ENCODE measurements at regions of chr20 and their contacts with region 1.

Region 1: GRCh38 chr20:31849455-31849925 is 4.1 kb upstream of the FOXS1 start:
- DNase-seq: no peak
- ATAC-seq: no peak
- H3K4me3 Mint-ChIP-seq: no peak overlapping the region
- H3K27ac Mint-ChIP-seq: no peak overlapping the region
- H3K4me1 Mint-ChIP-seq: no peaks in the 10 kb centered on the region
- H3K27me3 Mint-ChIP-seq: peaks cover 13% of the 10 kb centered on the region

Region 2: DNA sequence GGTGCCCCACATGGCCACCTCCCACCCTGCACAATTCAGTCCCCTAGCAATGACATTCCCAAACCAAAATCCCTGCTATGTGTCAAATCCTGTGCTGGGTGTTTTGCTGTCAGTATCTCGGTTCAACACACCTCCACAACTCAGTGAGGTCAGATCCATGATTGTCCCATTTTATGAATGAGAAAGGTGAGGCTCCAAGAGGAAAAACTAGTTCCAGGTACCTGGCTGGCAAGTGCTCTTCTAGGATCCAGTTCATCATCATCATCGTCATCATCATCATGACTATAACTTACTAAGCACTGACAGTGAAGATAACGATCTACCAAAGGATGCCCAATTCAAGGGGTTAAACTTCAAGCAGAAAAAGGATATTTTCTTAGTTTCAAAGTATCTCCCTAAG is 229.2 kb before region 1 on chr20:
- CTCF ChIA-PET with region 1: no interaction called
- POLR2A ChIA-PET with region 1: no interaction called
- DNase-seq: no peak
- ATAC-seq: no peak
- H3K4me3 Mint-ChIP-seq: no peak overlapping the region
- H3K27ac Mint-ChIP-seq: no peak overlapping the region
- H3K4me1 Mint-ChIP-seq: peaks cover 7% of the 10 kb centered on the region
- H3K27me3 Mint-ChIP-seq: peaks cover 14% of the 10 kb centered on the region

Region 3: DNA sequence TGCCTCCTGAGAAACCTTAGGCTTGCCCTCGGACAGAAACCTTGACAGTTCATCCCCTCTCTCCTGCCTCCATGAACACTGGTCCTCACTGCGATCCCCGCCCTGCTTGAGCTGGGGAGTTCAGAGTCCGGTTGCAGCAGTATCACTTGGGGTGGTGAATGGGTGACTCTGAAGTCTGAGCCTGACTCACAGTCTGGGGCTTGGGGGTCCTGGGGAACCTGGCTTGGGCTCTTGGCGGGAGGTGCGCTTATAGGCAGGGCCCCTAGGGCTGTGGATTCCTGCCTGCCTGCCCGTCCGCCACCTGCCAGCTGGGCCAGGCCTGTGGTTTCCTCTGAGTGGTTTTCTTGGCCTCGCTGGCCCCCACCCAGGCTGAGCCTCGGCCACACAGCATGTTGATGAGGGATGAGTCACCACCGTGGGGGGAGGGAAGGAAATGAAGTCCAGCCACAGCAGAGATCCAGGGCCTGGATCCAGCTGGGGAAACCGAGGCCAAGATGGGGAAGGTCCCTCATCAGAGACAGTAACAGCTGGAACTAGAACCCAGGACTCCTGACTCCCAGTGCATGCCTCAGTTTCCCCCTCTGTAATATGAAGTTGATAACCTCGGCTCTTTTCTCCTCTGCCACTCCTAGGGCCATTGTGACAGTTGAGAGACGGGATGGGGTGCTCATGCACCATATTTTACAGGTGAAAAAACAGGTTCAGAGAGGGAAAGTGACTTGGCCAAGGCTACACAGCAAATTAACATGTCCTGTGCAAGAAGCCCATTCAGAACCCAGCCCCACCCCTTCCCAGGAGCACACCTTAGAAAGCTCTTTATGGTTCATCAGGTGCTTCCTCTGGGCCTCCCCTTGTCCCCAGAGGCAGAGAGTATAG is 13.3 kb before region 1 on chr20:
- CTCF ChIA-PET with region 1: interaction called, 19 read pairs
- POLR2A ChIA-PET with region 1: no interaction called
- DNase-seq: peak; percentile 65
- ATAC-seq: peak; percentile 54
- H3K4me3 Mint-ChIP-seq: no peak overlapping the region
- H3K27ac Mint-ChIP-seq: no peak overlapping the region
- H3K4me1 Mint-ChIP-seq: peaks cover 23% of the 10 kb centered on the region
- H3K27me3 Mint-ChIP-seq: no peaks in the 10 kb centered on the region

Region 4: GRCh38 chr20:31879143-31879987 is 29.9 kb after region 1 on chr20:
- CTCF ChIA-PET with region 1: interaction called, 11 read pairs
- POLR2A ChIA-PET with region 1: no interaction called
- DNase-seq: peak; percentile 86
- ATAC-seq: peak; percentile 96
- H3K4me3 Mint-ChIP-seq: peak overlapping the region; percentile 87
- H3K27ac Mint-ChIP-seq: peak overlapping the region; percentile 62
- H3K4me1 Mint-ChIP-seq: peaks cover 13% of the 10 kb centered on the region
- H3K27me3 Mint-ChIP-seq: peaks cover 35% of the 10 kb centered on the region

Region 5: DNA sequence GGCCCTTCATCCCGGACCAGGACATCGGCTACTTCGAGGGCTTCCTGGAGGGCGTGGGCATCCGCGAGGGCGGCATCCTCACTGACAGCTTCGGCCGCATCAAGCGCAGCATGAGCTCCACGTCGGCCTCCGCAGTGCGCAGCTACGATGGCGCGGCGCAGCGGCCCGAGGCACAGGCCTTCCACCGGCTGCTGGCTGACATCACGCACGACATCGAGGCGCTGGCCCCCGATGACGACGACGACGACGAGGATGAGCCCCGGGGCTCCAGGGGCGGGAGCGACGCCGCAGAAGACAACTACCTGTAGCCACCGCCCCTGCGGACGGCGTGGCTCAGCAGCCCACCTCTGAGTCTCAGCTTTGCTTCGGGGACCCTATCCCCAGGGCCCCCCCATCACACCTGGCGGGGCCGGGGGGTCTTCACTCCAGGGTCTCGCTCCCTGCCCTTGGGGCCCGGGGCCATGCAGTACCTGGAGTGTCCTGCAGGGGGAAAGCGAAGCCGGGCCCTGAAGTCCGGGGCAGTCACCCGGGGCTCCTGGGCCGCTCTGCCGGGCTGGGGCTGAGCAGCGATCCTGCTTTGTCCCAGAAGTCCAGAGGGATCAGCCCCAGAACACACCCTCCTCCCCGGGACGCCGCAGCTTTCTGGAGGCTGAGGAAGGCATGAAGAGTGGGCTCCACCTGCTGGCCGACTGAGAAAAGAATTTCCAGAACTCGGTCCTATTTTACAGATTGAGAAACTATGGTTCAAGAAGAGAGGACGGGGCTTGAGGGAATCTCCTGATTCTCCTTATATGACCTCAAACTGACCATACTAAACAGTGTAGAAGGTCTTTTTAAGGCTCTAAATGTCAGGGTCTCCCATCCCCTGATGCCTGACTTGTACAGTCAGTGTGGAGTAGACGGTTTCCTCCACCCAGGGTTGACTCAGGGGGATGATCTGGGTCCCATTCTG is 181.8 kb after region 1 on chr20:
- CTCF ChIA-PET with region 1: interaction called, 51 read pairs
- POLR2A ChIA-PET with region 1: no interaction called
- DNase-seq: peak; percentile 68
- ATAC-seq: peak; percentile 75
- H3K4me3 Mint-ChIP-seq: no peak overlapping the region
- H3K27ac Mint-ChIP-seq: no peak overlapping the region
- H3K4me1 Mint-ChIP-seq: peaks cover 2% of the 10 kb centered on the region
- H3K27me3 Mint-ChIP-seq: peaks cover 32% of the 10 kb centered on the region